ENCODE measurements at regions of chr16 and their contacts with region 1.

Region 1: DNA sequence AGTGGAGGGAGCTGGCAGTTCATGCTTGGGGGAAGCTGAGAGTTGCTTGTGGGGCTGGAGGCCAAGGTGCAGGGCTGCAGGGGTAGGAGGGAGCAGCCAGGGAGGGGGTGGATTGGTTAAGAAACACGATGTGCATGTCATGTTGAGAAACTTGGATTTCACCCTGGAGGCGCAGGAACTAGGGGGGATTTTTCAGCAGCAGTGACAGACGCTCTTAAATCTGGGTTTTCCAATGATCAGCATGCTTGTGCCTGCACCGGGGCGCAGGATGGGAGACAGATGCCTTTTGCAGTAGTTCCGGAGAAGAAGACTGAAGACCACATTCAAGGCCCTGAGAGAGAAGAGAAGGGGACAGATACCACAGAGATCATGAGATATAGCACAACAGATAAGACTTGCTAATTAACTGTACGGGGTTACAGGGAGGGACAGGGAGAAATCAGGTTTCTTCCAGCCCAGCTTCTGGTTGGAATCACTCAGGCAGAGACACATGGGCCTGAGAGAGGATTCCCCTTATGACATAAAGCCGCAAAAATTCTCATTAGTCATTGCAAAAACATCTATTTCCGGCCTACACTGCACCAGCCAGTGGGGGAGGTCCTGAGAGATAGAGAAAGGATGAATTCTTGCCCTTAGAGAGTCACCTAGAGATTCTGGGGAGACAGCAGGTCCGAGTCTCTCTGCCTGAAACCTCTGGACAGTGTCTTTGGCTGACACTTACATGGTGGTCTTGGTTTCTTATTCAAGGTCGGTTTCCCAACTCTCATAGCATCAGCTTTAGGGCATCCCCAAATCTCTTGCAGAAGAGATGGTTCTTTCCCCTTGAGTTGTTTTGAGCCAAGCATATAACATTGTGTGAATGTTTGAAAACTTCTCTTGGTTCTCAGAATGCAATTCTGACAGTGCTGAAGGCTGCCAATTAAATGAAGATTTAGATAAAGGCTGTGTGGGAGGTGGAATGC is 27.1 kb downstream of the CDH13 start:
- DNase-seq: peak; percentile 90
- ATAC-seq: peak; percentile 76
- H3K4me3 ChIP-seq: peak overlapping the region; percentile 20; the same call in 1 of the 2 replicates
- H3K27ac ChIP-seq: peak overlapping the region; percentile 96
- H3K4me1 ChIP-seq: peaks cover 56% of the 10 kb centered on the region
- H3K27me3 ChIP-seq: no peaks in the 10 kb centered on the region
- CTCF ChIP-seq: no peak
- EP300 ChIP-seq: peak; percentile 85 to 89
- POLR2A ChIP-seq: peak; percentile 64
- RAD21 ChIP-seq: no peak

Region 2: GRCh38 chr16:82671741-82672140 is 17.9 kb after region 1 on chr16:
- CTCF ChIA-PET with region 1: interaction called, 7 read pairs
- POLR2A ChIA-PET with region 1: no interaction called
- RAD21 ChIA-PET with region 1: interaction called, 14 read pairs
- SMC1A ChIA-PET with region 1: interaction called, 8 read pairs
- in situ Hi-C with region 1: no loop called
- intact Hi-C with region 1: no loop called
- DNase-seq: no peak
- ATAC-seq: peak; percentile 71
- H3K4me3 ChIP-seq: no peak overlapping the region
- H3K27ac ChIP-seq: no peak overlapping the region
- H3K4me1 ChIP-seq: no peaks in the 10 kb centered on the region
- H3K27me3 ChIP-seq: no peaks in the 10 kb centered on the region; a peak in 1 of 4 replicates
- CTCF ChIP-seq: peak; percentile 23 to 55 (median 45)
- EP300 ChIP-seq: no peak
- POLR2A ChIP-seq: no peak
- RAD21 ChIP-seq: peak; percentile 46; the same call in 1 of the 2 replicates

Region 3: DNA sequence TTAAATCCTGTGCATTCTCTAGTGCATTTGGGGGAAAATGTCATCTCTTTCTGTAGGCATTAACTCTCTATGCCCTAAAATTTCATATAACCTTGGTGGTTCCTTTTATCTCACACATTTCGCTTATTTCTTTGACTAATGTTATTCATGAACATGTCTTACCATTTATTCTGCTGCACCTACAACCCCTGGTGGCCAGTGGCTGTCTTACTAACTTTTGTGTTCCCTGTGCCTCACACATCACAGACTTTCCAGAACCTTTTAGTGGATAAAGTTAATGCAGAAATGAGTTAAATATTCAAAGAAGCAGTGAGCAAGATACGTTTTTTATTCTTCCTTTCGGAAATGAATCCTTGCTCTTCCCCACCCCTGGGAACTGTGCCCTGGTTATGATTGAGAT is 84.9 kb after region 1 on chr16:
- CTCF ChIA-PET with region 1: no interaction called
- POLR2A ChIA-PET with region 1: no interaction called
- RAD21 ChIA-PET with region 1: interaction called, 4 read pairs
- SMC1A ChIA-PET with region 1: no interaction called
- in situ Hi-C with region 1: no loop called
- intact Hi-C with region 1: loop called (anchors 5 kb)
- DNase-seq: no peak
- ATAC-seq: no peak
- H3K4me3 ChIP-seq: no peak overlapping the region
- H3K27ac ChIP-seq: no peak overlapping the region
- H3K4me1 ChIP-seq: 0 out of 2 replicates have a peak, but pooled peaks cover 2% of the 10 kb centered on the region
- H3K27me3 ChIP-seq: no peaks in the 10 kb centered on the region
- CTCF ChIP-seq: peak; percentile 24 to 36 (median 28); a peak in 4 of 6 replicates
- EP300 ChIP-seq: no peak
- POLR2A ChIP-seq: no peak
- RAD21 ChIP-seq: peak; percentile 63; the same call in 1 of the 2 replicates

Measured in GM12878 (cell line).